GM12878 (cell line): ENCODE measurements at regions of chr20 and their contacts with region 1.

Region 1: GRCh38 chr20:21808863-21809664 is 103.6 kb downstream of the PAX1 start:
- DNase-seq: no peak
- ATAC-seq: peak; percentile 74
- H3K4me3 ChIP-seq: no peak overlapping the region
- H3K27ac ChIP-seq: no peak overlapping the region
- H3K4me1 ChIP-seq: no peaks in the 10 kb centered on the region
- H3K27me3 ChIP-seq: no peaks in the 10 kb centered on the region
- CTCF ChIP-seq: peak; percentile 51 to 73 (median 59)
- EP300 ChIP-seq: no peak
- POLR2A ChIP-seq: no peak
- RAD21 ChIP-seq: peak; percentile 26; the same call in 1 of the 2 replicates

Region 2: DNA sequence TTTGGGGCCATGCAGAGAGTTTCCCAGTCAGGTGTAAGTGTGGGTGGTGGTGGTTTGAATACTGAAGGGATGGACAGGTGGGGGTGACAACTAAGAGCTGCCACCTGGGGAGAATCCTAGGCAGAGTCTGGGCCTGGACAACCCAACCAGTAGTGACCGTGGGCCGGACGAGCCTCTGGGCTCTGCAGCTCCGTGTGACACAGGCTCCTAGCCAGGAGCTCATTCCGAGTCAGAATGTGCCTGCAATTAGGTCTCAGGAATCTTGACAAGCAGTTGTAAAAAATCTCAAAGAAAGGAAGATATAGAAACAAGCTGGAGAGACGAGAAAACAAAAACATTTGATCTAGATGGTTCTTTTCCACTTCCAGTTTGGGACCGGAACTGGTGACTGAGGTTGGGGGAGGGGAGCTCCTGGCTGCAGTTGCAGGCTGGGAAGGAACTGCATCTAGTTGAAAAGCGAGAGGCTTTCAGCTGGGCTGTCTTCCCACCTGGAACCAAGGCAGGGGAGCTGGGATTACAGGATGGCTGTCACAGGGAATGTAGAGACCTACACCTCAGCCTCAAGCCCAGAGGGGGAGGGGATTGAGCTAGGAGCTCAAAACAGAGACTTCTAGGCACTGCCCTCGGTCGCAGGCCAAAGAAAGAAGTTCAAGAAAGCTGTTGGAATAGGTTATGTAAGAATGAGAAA is 53.3 kb after region 1 on chr20:
- CTCF ChIA-PET with region 1: no interaction called
- POLR2A ChIA-PET with region 1: no interaction called
- RAD21 ChIA-PET with region 1: no interaction called
- SMC1A ChIA-PET with region 1: no interaction called
- in situ Hi-C with region 1: loop called (anchors 10 kb)
- intact Hi-C with region 1: no loop called
- DNase-seq: no peak
- ATAC-seq: no peak
- H3K4me3 ChIP-seq: no peak overlapping the region
- H3K27ac ChIP-seq: no peak overlapping the region
- H3K4me1 ChIP-seq: no peaks in the 10 kb centered on the region
- H3K27me3 ChIP-seq: no peaks in the 10 kb centered on the region
- CTCF ChIP-seq: no peak
- EP300 ChIP-seq: no peak
- POLR2A ChIP-seq: no peak
- RAD21 ChIP-seq: no peak

Region 3: DNA sequence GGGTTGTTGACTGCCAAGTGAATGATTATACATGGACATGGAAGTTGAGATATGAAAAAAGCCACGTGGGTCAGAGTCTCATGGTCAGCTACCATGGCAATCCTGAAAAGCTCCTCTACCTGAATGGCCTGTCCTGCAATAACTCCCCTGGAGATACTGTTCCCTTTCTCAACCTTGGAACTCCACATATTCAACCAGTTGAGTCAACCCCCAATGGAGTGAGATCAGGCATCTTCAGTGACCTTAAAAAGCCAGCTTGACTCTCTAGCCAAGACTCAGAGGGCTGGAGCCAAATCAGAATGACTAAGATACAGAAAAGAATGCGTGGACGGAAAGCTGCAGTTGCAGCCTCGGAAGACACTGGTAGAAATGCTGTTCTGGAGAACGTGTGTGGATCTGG is 434.0 kb after region 1 on chr20:
- CTCF ChIA-PET with region 1: interaction called, 3 read pairs
- POLR2A ChIA-PET with region 1: no interaction called
- RAD21 ChIA-PET with region 1: no interaction called
- SMC1A ChIA-PET with region 1: no interaction called
- in situ Hi-C with region 1: loop called (anchors 5 kb)
- intact Hi-C with region 1: loop called (anchors 1 kb)
- DNase-seq: no peak
- ATAC-seq: no peak
- H3K4me3 ChIP-seq: no peak overlapping the region
- H3K27ac ChIP-seq: no peak overlapping the region
- H3K4me1 ChIP-seq: no peaks in the 10 kb centered on the region
- H3K27me3 ChIP-seq: no peaks in the 10 kb centered on the region
- CTCF ChIP-seq: no peak
- EP300 ChIP-seq: no peak
- POLR2A ChIP-seq: no peak
- RAD21 ChIP-seq: no peak

Region 4: GRCh38 chr20:22248051-22248667 is 439.1 kb after region 1 on chr20:
- CTCF ChIA-PET with region 1: interaction called, 3 read pairs
- POLR2A ChIA-PET with region 1: no interaction called
- RAD21 ChIA-PET with region 1: no interaction called
- SMC1A ChIA-PET with region 1: interaction called, 3 read pairs
- in situ Hi-C with region 1: loop called (anchors 5 kb)
- intact Hi-C with region 1: loop called (anchors 1 kb)
- DNase-seq: no peak
- ATAC-seq: peak; percentile 52
- H3K4me3 ChIP-seq: no peak overlapping the region
- H3K27ac ChIP-seq: no peak overlapping the region
- H3K4me1 ChIP-seq: no peaks in the 10 kb centered on the region
- H3K27me3 ChIP-seq: no peaks in the 10 kb centered on the region
- CTCF ChIP-seq: peak; percentile 59 to 70 (median 59); a peak in 5 of 6 replicates
- EP300 ChIP-seq: no peak
- POLR2A ChIP-seq: no peak
- RAD21 ChIP-seq: peak; percentile 64

Region 5: DNA sequence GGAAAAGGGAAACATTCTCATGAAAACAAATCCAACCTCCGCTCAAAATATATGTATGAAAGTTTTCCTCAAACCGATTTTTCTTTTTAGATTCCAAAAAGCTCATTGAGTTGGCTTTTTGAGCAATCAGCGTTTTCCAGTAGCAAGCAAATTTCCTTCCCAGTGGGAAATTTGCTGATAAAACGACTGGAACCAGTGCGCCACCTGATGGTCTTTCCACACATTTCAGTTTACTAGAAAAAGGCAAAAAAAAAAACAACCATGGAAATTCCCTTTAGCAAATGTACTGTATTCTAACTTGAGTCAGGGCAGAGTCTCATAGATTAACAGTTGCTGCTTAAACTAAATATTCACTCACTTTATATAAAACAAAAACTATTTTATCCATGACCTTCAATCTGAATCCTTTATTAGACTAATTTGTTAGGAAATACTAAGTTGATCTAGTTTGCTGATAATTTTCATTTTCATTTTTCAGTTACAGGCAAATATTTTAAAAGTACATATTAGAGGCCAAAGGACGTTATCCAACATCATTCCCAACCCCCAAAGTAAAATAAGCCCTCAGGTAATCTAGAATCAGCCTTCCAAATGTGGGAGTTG is 503.8 kb after region 1 on chr20:
- CTCF ChIA-PET with region 1: interaction called, 5 read pairs
- POLR2A ChIA-PET with region 1: no interaction called
- RAD21 ChIA-PET with region 1: no interaction called
- SMC1A ChIA-PET with region 1: interaction called, 3 read pairs
- in situ Hi-C with region 1: loop called (anchors 5 kb)
- intact Hi-C with region 1: loop called (anchors 5 kb)
- DNase-seq: no peak
- ATAC-seq: peak; percentile 50; the same call in 2 of the 3 replicates
- H3K4me3 ChIP-seq: no peak overlapping the region
- H3K27ac ChIP-seq: no peak overlapping the region
- H3K4me1 ChIP-seq: no peaks in the 10 kb centered on the region
- H3K27me3 ChIP-seq: no peaks in the 10 kb centered on the region
- CTCF ChIP-seq: peak; percentile 47 to 62 (median 49); a peak in 5 of 6 replicates
- EP300 ChIP-seq: no peak
- POLR2A ChIP-seq: no peak
- RAD21 ChIP-seq: peak; percentile 49